CD4-positive, alpha-beta memory T cell (primary cell): ENCODE measurements at regions of chr19 and their contacts with region 1.

Region 1: DNA sequence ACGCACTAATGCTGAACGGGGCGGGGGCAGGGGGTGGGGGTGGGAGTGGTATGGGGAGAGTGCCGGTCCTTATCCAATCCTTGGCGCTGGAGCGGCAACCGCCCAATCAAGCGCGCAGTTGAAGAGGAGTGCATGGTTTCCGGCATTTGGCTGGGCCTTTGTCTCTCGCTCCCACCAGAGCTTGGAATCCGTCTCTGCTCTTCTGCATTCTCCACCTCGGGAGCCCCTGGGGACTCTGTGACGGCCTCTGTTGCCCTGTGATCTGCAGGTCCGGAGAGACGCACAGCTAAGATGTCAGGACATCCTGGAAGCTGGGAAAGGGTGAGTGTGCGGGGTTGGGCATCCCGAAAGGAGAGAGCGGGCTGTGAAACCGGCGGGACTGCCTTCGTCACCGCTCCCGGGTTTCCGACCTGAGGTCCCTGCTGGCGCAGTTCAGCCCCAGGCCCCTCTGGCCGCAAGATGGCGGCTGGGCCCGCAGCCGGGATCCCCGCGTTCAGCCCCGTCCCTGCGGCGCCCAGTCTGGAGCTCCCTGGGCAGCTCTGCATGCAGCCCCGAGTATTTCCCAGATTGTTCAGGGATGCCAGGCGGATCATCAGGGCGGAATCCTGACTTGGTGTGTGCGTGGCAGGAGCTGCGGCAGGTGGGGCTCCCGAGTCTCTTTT is 53.6 kb upstream of the ZNF254 start:
- DNase-seq: peak; percentile 82 to 92 (median 86)
- H3K4me3 ChIP-seq: peak overlapping the region; percentile 94 to 98
- H3K4me3 Mint-ChIP-seq: peak overlapping the region; percentile 99 to 100 (median 100)
- H3K27ac ChIP-seq: peak overlapping the region; percentile 86
- H3K27ac Mint-ChIP-seq: peak overlapping the region; percentile 96 to 100 (median 99)
- H3K4me1 ChIP-seq: peaks cover 42% of the 10 kb centered on the region
- H3K4me1 Mint-ChIP-seq: peaks cover 29 to 76% (median 55%) of the 10 kb centered on the region in 4 donors
- H3K27me3 ChIP-seq: no peaks in the 10 kb centered on the region
- H3K27me3 Mint-ChIP-seq: no peaks in the 10 kb centered on the region

Region 2: DNA sequence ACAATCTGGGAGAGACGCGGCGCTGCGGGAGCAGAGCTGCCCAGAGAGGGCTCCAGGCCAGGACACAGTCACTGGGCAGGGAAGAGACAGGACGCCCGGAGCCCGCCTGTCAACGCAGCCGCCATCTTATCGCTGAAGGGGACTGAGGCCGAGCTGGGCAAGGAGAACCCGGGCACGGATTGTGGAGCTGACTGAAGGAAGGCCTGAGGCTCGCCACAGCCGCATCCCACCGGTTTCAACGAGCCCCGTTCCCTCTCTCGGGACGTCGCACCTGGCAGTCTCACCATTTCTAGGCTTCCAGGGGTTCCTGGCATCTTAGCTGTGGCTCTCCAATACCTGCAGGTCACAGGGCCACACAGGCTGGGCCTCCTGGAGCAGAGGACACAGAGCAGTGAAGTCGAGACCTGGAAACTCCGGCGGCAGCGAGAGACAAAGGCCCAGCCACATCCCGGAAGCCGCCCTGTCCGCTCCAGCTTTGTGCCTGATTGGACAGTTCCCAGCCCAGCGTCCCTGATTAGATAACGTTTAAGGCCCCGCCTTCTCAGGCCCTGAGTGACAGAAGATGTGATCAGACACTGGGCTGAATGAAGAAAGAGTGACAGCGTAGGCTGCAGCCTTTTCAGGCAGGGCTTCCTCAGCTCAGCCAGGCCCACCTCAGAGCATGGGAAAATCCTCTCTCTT is 638.3 kb before region 1 on chr19 and contains the start of gene ZNF91:
- CTCF ChIA-PET with region 1: no interaction called
- POLR2A ChIA-PET with region 1: interaction called, 19 read pairs
- intact Hi-C with region 1: loop called (anchors 2 kb)
- DNase-seq: peak; percentile 88 to 97 (median 93)
- H3K4me3 ChIP-seq: peak within 1 kb of the TSS; percentile 91 to 92
- H3K4me3 Mint-ChIP-seq: peak within 1 kb of the TSS; percentile 98 to 99 (median 98)
- H3K27ac ChIP-seq: peak within 1 kb of the TSS; percentile 99
- H3K27ac Mint-ChIP-seq: peak within 1 kb of the TSS; percentile 98 to 99 (median 98)
- H3K4me1 ChIP-seq: peaks cover 36% of the 10 kb centered on the region
- H3K4me1 Mint-ChIP-seq: peaks cover 24 to 47% (median 33%) of the 10 kb centered on the region in 4 donors
- H3K27me3 ChIP-seq: no peaks in the 10 kb centered on the region
- H3K27me3 Mint-ChIP-seq: no peaks in the 10 kb centered on the region
- total RNA-seq, gene ZNF91: 111 to 113 TPM

Region 3: DNA sequence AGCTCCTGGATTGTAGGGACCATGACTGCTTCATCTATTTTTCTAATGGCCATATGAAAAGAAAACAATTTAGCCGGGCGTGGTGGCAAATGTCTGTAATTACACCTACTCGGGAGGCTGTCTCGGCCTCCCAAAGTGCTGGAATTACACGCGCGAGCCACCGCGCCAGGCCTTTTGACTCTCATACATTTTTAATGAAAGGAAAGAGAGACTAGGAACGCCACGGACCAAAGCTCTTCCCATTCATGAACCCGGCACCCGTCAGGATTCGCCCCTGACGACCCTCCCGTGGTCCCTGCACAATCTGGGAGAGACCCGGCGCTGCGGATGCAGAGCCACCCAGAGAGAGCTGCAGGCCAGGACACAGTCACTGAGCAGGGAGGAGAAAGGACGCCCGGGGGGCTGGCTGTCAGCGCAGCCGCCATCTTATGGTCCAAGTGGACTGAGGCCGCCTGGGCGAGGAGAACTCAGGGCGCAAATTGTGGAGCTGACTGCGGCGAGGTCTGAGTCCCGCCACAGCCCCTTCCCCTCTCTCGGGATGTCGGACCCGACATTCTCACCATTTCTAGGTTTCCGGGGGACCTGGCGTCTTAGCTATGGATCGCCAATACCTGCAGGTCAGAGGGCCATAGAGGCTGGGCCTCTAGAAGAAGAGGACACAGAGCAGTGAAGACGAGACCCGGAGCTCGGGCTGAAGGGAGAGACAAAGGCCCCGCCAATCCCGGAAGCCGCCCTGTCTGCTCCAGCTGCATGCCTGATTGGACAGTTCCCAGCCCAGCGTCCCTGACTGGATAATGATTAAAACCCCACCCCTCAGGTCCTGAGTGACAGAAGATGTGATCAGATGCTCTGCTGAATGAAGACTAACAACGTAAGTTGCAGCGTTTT is 275.0 kb before region 1 on chr19 and contains the start of gene ZNF681:
- CTCF ChIA-PET with region 1: interaction called, 3 read pairs
- POLR2A ChIA-PET with region 1: interaction called, 12 read pairs
- intact Hi-C with region 1: loop called (anchors 2 kb)
- DNase-seq: peak; percentile 86 to 95 (median 90)
- H3K4me3 ChIP-seq: peak within 1 kb of the TSS; percentile 80 to 98
- H3K4me3 Mint-ChIP-seq: peak within 1 kb of the TSS; percentile 94 to 98 (median 96)
- H3K27ac ChIP-seq: peak within 1 kb of the TSS; percentile 93
- H3K27ac Mint-ChIP-seq: peak within 1 kb of the TSS; percentile 95 to 99 (median 98)
- H3K4me1 ChIP-seq: peaks cover 17% of the 10 kb centered on the region
- H3K4me1 Mint-ChIP-seq: peaks cover 17 to 47% (median 28%) of the 10 kb centered on the region in 4 donors
- H3K27me3 ChIP-seq: no peaks in the 10 kb centered on the region
- H3K27me3 Mint-ChIP-seq: no peaks in the 10 kb centered on the region
- total RNA-seq, gene ZNF681: 8.0 to 8.3 TPM

Region 4: DNA sequence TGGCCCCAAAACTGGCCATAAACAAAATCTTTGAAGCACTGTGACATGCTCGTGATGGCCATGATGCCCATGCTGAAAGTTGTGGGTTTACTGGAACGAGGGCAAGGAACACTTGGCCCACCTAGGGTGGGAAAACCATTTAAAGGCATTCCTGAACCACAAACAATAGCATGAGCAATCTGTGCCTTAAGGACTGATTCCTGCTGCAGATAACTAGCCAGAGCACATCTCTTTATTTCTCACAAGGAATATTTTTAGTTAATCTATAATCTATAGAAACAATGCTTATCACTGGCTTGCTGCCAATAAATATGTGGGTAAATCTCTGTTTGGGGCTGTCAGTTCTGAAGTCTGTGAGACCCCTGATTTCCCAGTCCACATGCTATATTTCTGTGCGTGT is 129.0 kb before region 1 on chr19:
- CTCF ChIA-PET with region 1: no interaction called
- POLR2A ChIA-PET with region 1: no interaction called
- intact Hi-C with region 1: no loop called
- DNase-seq: no peak
- H3K4me3 ChIP-seq: no peak overlapping the region
- H3K4me3 Mint-ChIP-seq: no peak overlapping the region
- H3K27ac ChIP-seq: no peak overlapping the region
- H3K27ac Mint-ChIP-seq: no peak overlapping the region
- H3K4me1 ChIP-seq: no peaks in the 10 kb centered on the region
- H3K4me1 Mint-ChIP-seq: no peaks in the 10 kb centered on the region
- H3K27me3 ChIP-seq: no peaks in the 10 kb centered on the region
- H3K27me3 Mint-ChIP-seq: no peaks in the 10 kb centered on the region

Region 5: GRCh38 chr19:23914402-23915301 is 118.8 kb before region 1 on chr19 and contains the start of gene ZNF726:
- CTCF ChIA-PET with region 1: no interaction called
- POLR2A ChIA-PET with region 1: interaction called, 16 read pairs
- intact Hi-C with region 1: loop called (anchors 1 kb)
- DNase-seq: peak; percentile 88 to 92 (median 89)
- H3K4me3 ChIP-seq: peak within 1 kb of the TSS; percentile 53 to 59
- H3K4me3 Mint-ChIP-seq: peak within 1 kb of the TSS; percentile 93 to 97 (median 95)
- H3K27ac ChIP-seq: peak within 1 kb of the TSS; percentile 53
- H3K27ac Mint-ChIP-seq: peak within 1 kb of the TSS; percentile 90 to 96 (median 91)
- H3K4me1 ChIP-seq: no peaks in the 10 kb centered on the region
- H3K4me1 Mint-ChIP-seq: peaks cover 6 to 24% (median 15%) of the 10 kb centered on the region in 4 donors
- H3K27me3 ChIP-seq: no peaks in the 10 kb centered on the region
- H3K27me3 Mint-ChIP-seq: no peaks in the 10 kb centered on the region
- total RNA-seq, gene ZNF726: 3.0 to 3.3 TPM

Region 6: GRCh38 chr19:24086974-24087595 is 53.7 kb after region 1 on chr19 and contains the start of gene ZNF254:
- CTCF ChIA-PET with region 1: no interaction called
- POLR2A ChIA-PET with region 1: interaction called, 34 read pairs
- intact Hi-C with region 1: loop called (anchors 5 kb)
- DNase-seq: peak; percentile 65 to 84 (median 74)
- H3K4me3 ChIP-seq: peak within 1 kb of the TSS; percentile 69 to 78
- H3K4me3 Mint-ChIP-seq: peak within 1 kb of the TSS; percentile 93 to 97 (median 96)
- H3K27ac ChIP-seq: peak within 1 kb of the TSS; percentile 73
- H3K27ac Mint-ChIP-seq: peak within 1 kb of the TSS; percentile 89 to 97 (median 95)
- H3K4me1 ChIP-seq: peaks cover 8% of the 10 kb centered on the region
- H3K4me1 Mint-ChIP-seq: peaks cover 4 to 13% (median 8%) of the 10 kb centered on the region in 4 donors
- H3K27me3 ChIP-seq: no peaks in the 10 kb centered on the region
- H3K27me3 Mint-ChIP-seq: no peaks in the 10 kb centered on the region
- total RNA-seq, gene ZNF254: 17.6 to 19.1 TPM